ENCODE measurements at regions of chr1 and their contacts with region 1.

Region 1: DNA sequence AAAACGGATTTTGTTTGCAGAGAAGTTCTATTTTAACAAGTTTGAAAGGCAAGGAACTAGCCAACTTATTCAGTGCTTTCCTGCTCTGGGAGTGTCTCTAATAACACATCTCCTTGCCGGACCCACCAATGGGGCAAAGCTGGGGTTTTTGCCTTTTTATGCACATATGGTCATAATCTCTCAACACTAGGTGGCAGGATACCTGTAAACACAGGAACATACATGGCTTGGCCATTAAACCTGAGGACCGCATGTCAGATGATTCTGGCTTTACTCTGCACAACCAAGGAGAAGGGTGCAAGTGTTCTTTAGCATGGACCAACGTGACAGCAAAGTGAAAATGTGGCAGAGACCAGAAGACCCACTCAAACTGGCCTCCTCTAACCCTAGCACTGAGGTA is 4.9 kb downstream of the TMEM9 start:
- DNase-seq: no peak
- H3K4me3 ChIP-seq: no peak overlapping the region
- H3K27ac ChIP-seq: no peak overlapping the region
- H3K4me1 ChIP-seq: peaks cover 5 to 19% of the 10 kb centered on the region in 2 donors
- H3K27me3 ChIP-seq: no peaks in the 10 kb centered on the region
- CTCF ChIP-seq: peak in 3 of 6 experiments; percentile 4 to 36 (median 33)
- POLR2A ChIP-seq: no peak

Region 2: GRCh38 chr1:201119206-201120197 is 29.9 kb before region 1 on chr1:
- intact Hi-C with region 1: no loop called
- DNase-seq: peak; percentile 19 to 26
- H3K4me3 ChIP-seq: no peak overlapping the region
- H3K27ac ChIP-seq: no peak overlapping the region
- H3K4me1 ChIP-seq: peaks cover 0 to 4% of the 10 kb centered on the region in 2 donors
- H3K27me3 ChIP-seq: no peaks in the 10 kb centered on the region
- CTCF ChIP-seq: peak in 4 of 6 experiments; percentile 16 to 46 (median 20)
- POLR2A ChIP-seq: no peak

Region 3: DNA sequence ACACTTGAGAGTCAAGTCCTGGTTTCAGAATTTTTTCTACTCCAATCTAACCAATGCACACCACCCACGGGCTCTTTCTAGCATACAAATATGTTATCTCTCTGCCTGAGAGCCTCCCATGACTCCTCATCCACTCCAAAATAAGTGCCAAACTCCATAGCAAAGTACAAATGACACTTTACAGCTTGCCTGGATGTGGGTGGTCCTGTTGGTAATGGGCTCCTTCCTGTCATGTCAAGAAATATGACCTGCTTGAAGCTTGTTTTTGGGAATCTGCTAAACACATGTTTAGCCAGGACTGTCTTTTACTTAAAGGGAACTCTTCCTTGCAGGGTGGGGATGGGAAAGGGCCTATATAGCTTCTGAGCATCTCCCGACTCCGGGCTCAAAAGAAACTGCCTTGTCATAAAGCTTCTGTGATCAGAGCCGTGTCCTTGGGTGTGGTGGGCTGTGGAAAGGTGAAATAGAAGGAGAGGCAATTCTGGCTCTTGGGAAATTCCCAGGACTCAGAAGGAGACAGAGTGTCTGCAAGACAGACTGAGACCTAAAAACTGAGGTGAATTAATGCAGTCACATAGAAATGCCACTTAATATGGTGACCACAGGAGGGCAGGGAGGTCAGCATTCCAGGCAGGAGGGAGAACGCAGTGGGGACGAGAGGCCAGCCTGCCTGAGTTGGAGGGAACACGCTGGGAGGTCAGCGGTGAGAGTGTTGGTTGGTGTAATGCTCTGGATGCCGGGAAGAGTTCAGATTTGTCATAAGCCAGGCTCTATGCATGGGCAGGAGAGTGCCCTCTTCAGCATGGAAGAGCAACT is 35.1 kb after region 1 on chr1:
- intact Hi-C with region 1: loop called (anchors 5 kb)
- DNase-seq: peak; percentile 48 to 60
- H3K4me3 ChIP-seq: no peak overlapping the region
- H3K27ac ChIP-seq: no peak overlapping the region
- H3K4me1 ChIP-seq: peaks cover 0 to 8% of the 10 kb centered on the region in 2 donors
- H3K27me3 ChIP-seq: no peaks in the 10 kb centered on the region
- CTCF ChIP-seq: peak in 4 of 6 experiments; percentile 38 to 60 (median 50)
- POLR2A ChIP-seq: no peak

Measured in thyroid gland (tissue), 4 donors.